Activated CD8-positive, alpha-beta T cell treated with anti-CD3 and anti-CD28 coated beads for 36 hours (primary cell): ENCODE measurements at regions of chr17 and their contacts with region 1.

Region 1: GRCh38 chr17:60640503-60640902 is 37.1 kb upstream of the BCAS3 start:
- DNase-seq: no peak
- ATAC-seq: no peak
- H3K4me3 Mint-ChIP-seq: no peak overlapping the region
- H3K27ac Mint-ChIP-seq: no peak overlapping the region
- H3K4me1 Mint-ChIP-seq: peaks cover 13% of the 10 kb centered on the region
- H3K27me3 Mint-ChIP-seq: no peaks in the 10 kb centered on the region
- CTCF ChIP-seq: no peak

Region 2: GRCh38 chr17:60577147-60577915 is 63.2 kb before region 1 on chr17:
- CTCF ChIA-PET with region 1: interaction called, 20 read pairs
- POLR2A ChIA-PET with region 1: no interaction called
- intact Hi-C with region 1: no loop called
- DNase-seq: no peak
- ATAC-seq: no peak
- H3K4me3 Mint-ChIP-seq: peak overlapping the region; percentile 60
- H3K27ac Mint-ChIP-seq: peak overlapping the region; percentile 25
- H3K4me1 Mint-ChIP-seq: peaks cover 6% of the 10 kb centered on the region
- H3K27me3 Mint-ChIP-seq: peaks cover 3% of the 10 kb centered on the region
- CTCF ChIP-seq: no peak

Region 3: GRCh38 chr17:60599620-60600489 is 40.6 kb before region 1 on chr17 and contains the start of gene PPM1D:
- CTCF ChIA-PET with region 1: interaction called, 15 read pairs
- POLR2A ChIA-PET with region 1: interaction called, 14 read pairs
- intact Hi-C with region 1: no loop called
- DNase-seq: peak; percentile 99
- ATAC-seq: peak; percentile 94
- H3K4me3 Mint-ChIP-seq: peak within 1 kb of the TSS; percentile 84
- H3K27ac Mint-ChIP-seq: peak within 1 kb of the TSS; percentile 95
- H3K4me1 Mint-ChIP-seq: peaks cover 32% of the 10 kb centered on the region
- H3K27me3 Mint-ChIP-seq: peaks cover 1% of the 10 kb centered on the region
- CTCF ChIP-seq: no peak
- total RNA-seq, gene PPM1D: 11.6 to 12.3 TPM

Region 4: GRCh38 chr17:60615840-60616239 is 24.7 kb before region 1 on chr17:
- CTCF ChIA-PET with region 1: interaction called, 10 read pairs
- POLR2A ChIA-PET with region 1: no interaction called
- intact Hi-C with region 1: no loop called
- DNase-seq: no peak
- ATAC-seq: no peak
- H3K4me3 Mint-ChIP-seq: no peak overlapping the region
- H3K27ac Mint-ChIP-seq: no peak overlapping the region
- H3K4me1 Mint-ChIP-seq: peaks cover 24% of the 10 kb centered on the region
- H3K27me3 Mint-ChIP-seq: no peaks in the 10 kb centered on the region
- CTCF ChIP-seq: no peak

Region 5: GRCh38 chr17:60622961-60623360 is 17.5 kb before region 1 on chr17:
- CTCF ChIA-PET with region 1: interaction called, 10 read pairs
- POLR2A ChIA-PET with region 1: no interaction called
- intact Hi-C with region 1: no loop called
- DNase-seq: no peak
- ATAC-seq: no peak
- H3K4me3 Mint-ChIP-seq: no peak overlapping the region
- H3K27ac Mint-ChIP-seq: no peak overlapping the region
- H3K4me1 Mint-ChIP-seq: peaks cover 20% of the 10 kb centered on the region
- H3K27me3 Mint-ChIP-seq: no peaks in the 10 kb centered on the region
- CTCF ChIP-seq: no peak

Region 6: DNA sequence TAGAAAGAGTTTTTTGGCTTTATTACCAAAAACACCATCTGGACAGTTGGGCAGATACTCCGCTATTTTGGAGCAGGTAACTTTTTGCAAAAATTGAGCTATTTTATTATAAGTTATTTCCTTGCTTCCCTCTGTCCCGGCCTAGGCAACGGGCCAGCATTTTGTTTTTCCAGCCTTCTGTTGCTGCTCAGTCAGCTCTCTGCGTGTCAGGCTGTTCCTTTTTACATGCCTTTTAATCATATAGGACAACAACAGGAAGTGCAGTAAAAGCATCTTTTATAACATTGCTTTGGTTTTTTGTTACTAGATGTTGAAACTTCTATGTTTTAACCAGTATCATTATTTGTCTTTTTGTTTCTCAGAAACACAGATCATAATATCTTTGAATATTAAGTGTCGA is 10.2 kb before region 1 on chr17:
- CTCF ChIA-PET with region 1: interaction called, 11 read pairs
- POLR2A ChIA-PET with region 1: no interaction called
- intact Hi-C with region 1: no loop called
- DNase-seq: no peak
- ATAC-seq: no peak
- H3K4me3 Mint-ChIP-seq: no peak overlapping the region
- H3K27ac Mint-ChIP-seq: no peak overlapping the region
- H3K4me1 Mint-ChIP-seq: peaks cover 8% of the 10 kb centered on the region
- H3K27me3 Mint-ChIP-seq: no peaks in the 10 kb centered on the region
- CTCF ChIP-seq: no peak

Region 7: GRCh38 chr17:60652454-60653247 is 12.1 kb after region 1 on chr17:
- CTCF ChIA-PET with region 1: interaction called, 14 read pairs
- POLR2A ChIA-PET with region 1: no interaction called
- intact Hi-C with region 1: no loop called
- DNase-seq: no peak
- ATAC-seq: peak; percentile 56
- H3K4me3 Mint-ChIP-seq: no peak overlapping the region
- H3K27ac Mint-ChIP-seq: peak overlapping the region; percentile 8
- H3K4me1 Mint-ChIP-seq: peaks cover 25% of the 10 kb centered on the region
- H3K27me3 Mint-ChIP-seq: no peaks in the 10 kb centered on the region
- CTCF ChIP-seq: no peak